ENCODE measurements at regions of chr12 and their contacts with region 1.

Region 1: DNA sequence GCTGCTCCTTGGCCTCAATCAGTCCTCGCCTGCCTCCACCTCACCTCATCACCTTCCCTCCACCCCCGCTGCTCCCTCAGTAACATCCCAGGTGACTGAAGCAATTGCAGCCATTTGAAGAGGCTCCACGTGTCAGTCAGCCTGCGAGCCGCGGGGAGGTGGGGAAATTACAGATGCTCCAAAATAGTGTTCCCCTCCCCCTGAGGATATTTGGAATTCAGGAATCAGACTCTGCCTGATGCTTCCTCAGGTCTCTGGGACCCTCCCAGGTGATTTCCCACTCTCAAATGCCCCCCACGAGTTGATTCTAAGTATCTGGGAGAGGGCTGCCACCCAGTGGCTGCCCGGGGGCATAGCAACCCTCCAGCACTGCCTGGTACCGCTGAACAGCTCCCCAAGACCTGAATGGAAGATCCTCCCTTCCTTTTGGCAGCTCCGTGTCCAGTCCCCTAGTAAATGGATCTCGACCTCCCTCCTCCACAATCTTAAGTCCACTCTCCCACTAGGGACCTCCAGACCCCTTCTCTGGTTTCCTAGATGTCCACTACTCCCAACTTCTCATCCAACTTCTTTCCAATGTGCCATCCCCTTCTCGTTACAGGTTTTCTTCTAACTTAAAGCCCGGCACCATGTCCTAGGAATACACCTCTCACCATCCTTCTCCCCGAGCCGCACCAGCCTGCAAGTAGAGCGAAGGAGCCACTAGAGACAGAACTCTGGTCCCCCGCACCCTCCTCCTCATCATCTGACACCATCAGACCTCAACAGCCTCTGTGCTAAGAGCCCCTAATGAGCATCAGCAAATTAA is 1.4 kb upstream of the ASIC1 start:
- DNase-seq: peak; percentile 79
- ATAC-seq: peak; percentile 79
- H3K4me3 ChIP-seq: peak overlapping the region in 2 of 5 experiments; percentile 13 to 21
- H3K4me3 Mint-ChIP-seq: peak overlapping the region; percentile 92
- H3K27ac ChIP-seq: no peak overlapping the region
- H3K27ac Mint-ChIP-seq: peak overlapping the region; percentile 34
- H3K4me1 ChIP-seq: peaks cover 22 to 23% of the 10 kb centered on the region in 2 donors
- H3K4me1 Mint-ChIP-seq: peaks cover 21% of the 10 kb centered on the region
- H3K27me3 ChIP-seq: peaks cover 0 to 60% (median 27%) of the 10 kb centered on the region in 4 experiments
- H3K27me3 Mint-ChIP-seq: peaks cover 67% of the 10 kb centered on the region
- CTCF ChIP-seq: peak; percentile 97

Region 2: GRCh38 chr12:49866859-49867579 is 189.0 kb before region 1 on chr12:
- CTCF ChIA-PET with region 1: interaction called, 6 read pairs
- POLR2A ChIA-PET with region 1: no interaction called
- intact Hi-C with region 1: loop called (anchors 5 kb)
- DNase-seq: peak; percentile 79
- ATAC-seq: peak; percentile 96
- H3K4me3 ChIP-seq: no peak overlapping the region
- H3K4me3 Mint-ChIP-seq: no peak overlapping the region
- H3K27ac ChIP-seq: no peak overlapping the region
- H3K27ac Mint-ChIP-seq: no peak overlapping the region
- H3K4me1 ChIP-seq: no peaks in the 10 kb centered on the region
- H3K4me1 Mint-ChIP-seq: no peaks in the 10 kb centered on the region
- H3K27me3 ChIP-seq: no peaks in the 10 kb centered on the region
- H3K27me3 Mint-ChIP-seq: peaks cover 14% of the 10 kb centered on the region
- CTCF ChIP-seq: peak; percentile 95

Region 3: GRCh38 chr12:50038336-50038735 is 17.7 kb before region 1 on chr12:
- CTCF ChIA-PET with region 1: interaction called, 22 read pairs
- POLR2A ChIA-PET with region 1: no interaction called
- intact Hi-C with region 1: loop called (anchors 1 kb)
- DNase-seq: no peak
- ATAC-seq: no peak
- H3K4me3 ChIP-seq: no peak overlapping the region
- H3K4me3 Mint-ChIP-seq: no peak overlapping the region
- H3K27ac ChIP-seq: no peak overlapping the region
- H3K27ac Mint-ChIP-seq: no peak overlapping the region
- H3K4me1 ChIP-seq: peaks cover 7% of the 10 kb centered on the region in 2 donors
- H3K4me1 Mint-ChIP-seq: peaks cover 2% of the 10 kb centered on the region
- H3K27me3 ChIP-seq: peaks cover 0 to 3% (median 0%) of the 10 kb centered on the region in 4 experiments
- H3K27me3 Mint-ChIP-seq: peaks cover 10% of the 10 kb centered on the region
- CTCF ChIP-seq: no peak

Region 4: GRCh38 chr12:50043854-50044253 is 12.2 kb before region 1 on chr12:
- CTCF ChIA-PET with region 1: interaction called, 22 read pairs
- POLR2A ChIA-PET with region 1: no interaction called
- intact Hi-C with region 1: loop called (anchors 1 kb)
- DNase-seq: no peak
- ATAC-seq: no peak
- H3K4me3 ChIP-seq: no peak overlapping the region
- H3K4me3 Mint-ChIP-seq: no peak overlapping the region
- H3K27ac ChIP-seq: no peak overlapping the region
- H3K27ac Mint-ChIP-seq: no peak overlapping the region
- H3K4me1 ChIP-seq: no peaks in the 10 kb centered on the region
- H3K4me1 Mint-ChIP-seq: no peaks in the 10 kb centered on the region
- H3K27me3 ChIP-seq: peaks cover 0 to 5% (median 0%) of the 10 kb centered on the region in 4 experiments
- H3K27me3 Mint-ChIP-seq: no peaks in the 10 kb centered on the region
- CTCF ChIP-seq: no peak

Region 5: GRCh38 chr12:50066433-50066832 is 10.4 kb after region 1 on chr12:
- CTCF ChIA-PET with region 1: interaction called, 17 read pairs
- POLR2A ChIA-PET with region 1: no interaction called
- intact Hi-C with region 1: no loop called
- DNase-seq: no peak
- ATAC-seq: no peak
- H3K4me3 ChIP-seq: no peak overlapping the region
- H3K4me3 Mint-ChIP-seq: no peak overlapping the region
- H3K27ac ChIP-seq: no peak overlapping the region
- H3K27ac Mint-ChIP-seq: no peak overlapping the region
- H3K4me1 ChIP-seq: peaks cover 0 to 5% of the 10 kb centered on the region in 2 donors
- H3K4me1 Mint-ChIP-seq: peaks cover 4% of the 10 kb centered on the region
- H3K27me3 ChIP-seq: peaks cover 0 to 8% (median 1%) of the 10 kb centered on the region in 4 experiments
- H3K27me3 Mint-ChIP-seq: peaks cover 22% of the 10 kb centered on the region
- CTCF ChIP-seq: no peak

Measured in B cell (primary cell).